Astrocyte of the cerebellum (primary cell): ENCODE measurements at regions of chr12 and their contacts with region 1.

Region 1: GRCh38 chr12:94254270-94254669 is 105.9 kb downstream of the PLXNC1 start:
- DNase-seq: no peak
- H3K4me3 ChIP-seq: no peak overlapping the region
- CTCF ChIP-seq: no peak

Region 2: DNA sequence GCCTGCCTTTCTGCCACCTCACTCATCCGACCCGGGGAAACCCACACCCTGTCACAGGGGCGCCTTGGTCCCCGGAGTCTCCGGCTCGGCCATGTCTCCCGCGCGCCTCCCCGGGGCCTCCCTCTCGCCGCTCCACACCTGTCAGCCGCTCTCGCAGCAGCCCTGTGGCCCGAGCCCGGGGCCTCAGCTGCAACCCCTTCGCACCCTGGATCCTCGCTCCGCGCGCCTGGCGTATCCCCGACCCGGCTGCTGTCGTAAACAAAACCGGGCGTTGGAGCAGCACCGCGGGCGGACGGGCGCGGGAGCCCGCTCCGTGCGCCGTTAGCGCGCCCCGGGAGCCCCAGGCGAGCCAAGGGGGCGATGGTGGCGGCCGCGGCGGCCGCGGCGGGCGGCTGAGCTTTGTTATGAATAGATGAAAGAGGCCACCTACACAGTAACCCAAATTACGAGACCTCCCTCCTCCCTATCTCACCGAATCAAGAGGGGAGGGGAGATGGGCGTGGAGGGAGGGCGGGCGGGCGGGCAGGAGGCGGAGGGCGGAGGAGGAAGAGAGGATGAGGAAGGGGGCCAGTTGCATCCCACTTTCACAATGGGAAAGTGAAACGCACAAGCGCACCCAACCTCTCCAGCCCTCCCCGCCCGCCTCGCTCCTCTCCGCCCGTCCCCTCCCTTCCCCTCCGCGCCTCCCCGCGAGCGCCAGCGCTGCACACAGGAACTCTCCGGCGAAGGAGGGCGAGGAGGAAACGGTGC is 106.1 kb before region 1 on chr12 and contains the start of gene PLXNC1:
- in situ Hi-C with region 1: no loop called
- DNase-seq: no peak
- H3K4me3 ChIP-seq: peak within 1 kb of the TSS; percentile 40
- CTCF ChIP-seq: no peak

Region 3: GRCh38 chr12:94304566-94305061 is 50.3 kb after region 1 on chr12:
- in situ Hi-C with region 1: loop called (anchors 5 kb)
- DNase-seq: peak; percentile 16
- H3K4me3 ChIP-seq: no peak overlapping the region
- CTCF ChIP-seq: no peak

Region 4: DNA sequence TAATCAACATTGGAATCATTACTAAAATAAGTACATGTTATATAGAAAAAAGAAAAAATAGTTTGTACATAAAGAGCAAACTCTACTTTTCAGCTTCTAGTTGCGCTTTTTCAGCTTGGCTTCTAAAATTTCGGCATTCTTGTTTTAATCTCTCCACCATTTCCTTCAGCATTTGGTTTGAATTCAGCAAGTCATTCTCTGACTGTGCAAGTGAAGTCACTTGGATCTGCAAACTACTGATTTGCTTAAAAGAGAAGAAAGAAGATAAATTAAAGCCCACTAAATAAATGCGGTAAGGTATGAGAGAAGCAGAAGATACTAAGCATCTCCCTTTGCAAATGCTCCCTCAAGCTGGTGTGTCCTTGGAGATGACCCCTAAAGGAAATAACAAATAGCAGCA is 79.1 kb after region 1 on chr12:
- in situ Hi-C with region 1: loop called (anchors 5 kb)
- DNase-seq: no peak
- H3K4me3 ChIP-seq: no peak overlapping the region
- CTCF ChIP-seq: no peak